Right cardiac atrium (tissue), 5 donors: ENCODE measurements at regions of chr7 and their contacts with region 1.

Region 1: GRCh38 chr7:74173866-74174605 is at the start of gene EIF4H:
- DNase-seq: peak; percentile 97 to 99 (median 99)
- ATAC-seq: peak; percentile 98 to 99
- H3K4me3 ChIP-seq: peak within 1 kb of the TSS; percentile 57
- H3K27ac ChIP-seq: peak within 1 kb of the TSS; percentile 71
- H3K4me1 ChIP-seq: peaks cover 4% of the 10 kb centered on the region
- H3K27me3 ChIP-seq: no peaks in the 10 kb centered on the region
- total RNA-seq, gene EIF4H: 186 to 223 (median 202) TPM

Region 2: DNA sequence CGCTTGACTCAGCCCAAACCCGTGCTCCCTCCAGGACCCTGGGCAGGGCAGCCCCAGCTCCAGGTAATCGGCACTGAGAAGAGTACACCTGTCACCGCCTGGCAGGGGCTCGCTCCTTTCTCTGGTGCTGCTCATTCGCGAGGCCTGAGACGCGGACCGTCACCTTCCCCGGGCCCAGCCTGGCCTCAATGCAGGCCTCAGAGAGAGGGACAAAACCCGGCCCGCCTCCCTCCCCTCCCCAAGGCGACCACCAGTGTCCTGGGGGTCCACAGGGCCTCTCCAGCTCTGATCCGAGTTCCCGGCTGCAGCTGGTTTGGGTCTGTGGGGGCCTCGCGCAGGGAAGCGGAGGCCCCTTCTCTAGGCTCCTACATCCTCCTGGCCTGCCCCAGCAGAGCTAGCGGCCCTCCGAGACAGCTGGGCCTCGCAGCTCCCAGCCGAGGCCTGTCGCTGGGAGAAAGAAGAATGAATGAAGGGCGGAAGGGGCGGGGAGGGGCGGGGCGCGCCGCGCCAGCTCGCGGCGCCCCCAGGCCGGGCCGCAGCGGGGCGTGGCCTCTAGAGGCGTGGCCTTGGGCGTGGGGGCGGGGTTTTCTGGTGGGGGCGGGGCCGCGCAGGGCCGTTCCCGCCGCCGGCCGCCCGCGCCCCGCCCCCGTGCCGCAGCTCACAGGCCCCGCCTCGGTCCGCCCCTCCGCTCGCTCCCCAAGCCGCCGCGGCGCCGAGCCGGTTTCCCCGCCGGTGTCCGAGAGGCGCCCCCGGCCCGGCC is 90.7 kb before region 1 on chr7 and contains the start of gene LIMK1:
- intact Hi-C with region 1: loop called in 1 of 4 experiments (anchors 10 kb)
- DNase-seq: peak; percentile 81 to 94 (median 92)
- ATAC-seq: peak; percentile 86 to 93
- H3K4me3 ChIP-seq: peak within 1 kb of the TSS; percentile 100
- H3K27ac ChIP-seq: no peak within 1 kb of the TSS
- H3K4me1 ChIP-seq: peaks cover 6% of the 10 kb centered on the region
- H3K27me3 ChIP-seq: no peaks in the 10 kb centered on the region
- total RNA-seq, gene LIMK1: 10.4 to 13.5 (median 11.9) TPM

Region 3: DNA sequence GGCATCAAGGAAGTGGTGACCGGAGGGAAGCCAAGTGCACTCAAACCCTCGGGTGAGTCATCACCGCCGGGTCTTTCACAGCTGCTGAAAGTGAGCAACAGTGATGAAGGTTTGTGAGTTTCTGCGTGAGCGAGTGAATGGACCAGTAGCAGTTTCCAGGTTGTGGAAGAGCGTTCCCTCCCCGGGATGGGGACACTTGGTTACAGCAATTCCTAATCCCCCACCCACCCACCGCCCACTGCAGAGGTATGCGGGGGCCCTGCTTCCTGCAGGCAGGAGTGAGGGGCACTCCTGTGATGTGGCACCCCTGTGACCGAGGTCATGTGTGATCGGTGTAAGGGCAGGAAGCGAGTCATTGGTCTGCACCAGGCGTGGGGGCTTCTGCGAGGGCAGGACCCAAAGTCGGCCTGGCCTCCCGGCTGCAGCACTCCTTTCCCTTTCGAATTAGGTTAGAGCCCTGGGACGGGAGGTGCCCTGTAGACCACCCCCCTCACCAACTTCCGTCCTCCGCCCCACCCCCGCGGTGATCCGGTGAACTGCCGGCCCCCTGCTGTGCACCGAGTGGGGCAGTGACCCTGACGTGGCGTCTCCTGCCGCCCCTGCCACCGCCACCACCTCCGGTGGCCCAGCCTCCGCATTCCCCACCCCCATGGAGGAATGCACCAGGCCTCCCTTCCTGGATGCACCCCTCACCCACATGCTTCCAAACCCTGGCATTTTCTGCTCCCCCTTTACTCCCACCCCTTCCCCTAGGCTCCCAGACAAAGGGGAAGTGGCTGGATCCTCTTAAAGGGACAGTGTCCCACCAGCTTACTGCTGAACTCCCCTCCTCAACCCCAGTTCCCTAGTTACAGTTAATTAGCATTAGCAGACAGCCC is 79.6 kb before region 1 on chr7:
- intact Hi-C with region 1: loop called in 2 of 4 experiments (anchors 10 kb)
- DNase-seq: peak; percentile 84 to 87 (median 84)
- ATAC-seq: peak; percentile 66 to 86
- H3K4me3 ChIP-seq: peak overlapping the region; percentile 11
- H3K27ac ChIP-seq: no peak overlapping the region
- H3K4me1 ChIP-seq: peaks cover 5% of the 10 kb centered on the region
- H3K27me3 ChIP-seq: no peaks in the 10 kb centered on the region